ENCODE measurements at regions of chr4 and their contacts with region 1.

Region 1: DNA sequence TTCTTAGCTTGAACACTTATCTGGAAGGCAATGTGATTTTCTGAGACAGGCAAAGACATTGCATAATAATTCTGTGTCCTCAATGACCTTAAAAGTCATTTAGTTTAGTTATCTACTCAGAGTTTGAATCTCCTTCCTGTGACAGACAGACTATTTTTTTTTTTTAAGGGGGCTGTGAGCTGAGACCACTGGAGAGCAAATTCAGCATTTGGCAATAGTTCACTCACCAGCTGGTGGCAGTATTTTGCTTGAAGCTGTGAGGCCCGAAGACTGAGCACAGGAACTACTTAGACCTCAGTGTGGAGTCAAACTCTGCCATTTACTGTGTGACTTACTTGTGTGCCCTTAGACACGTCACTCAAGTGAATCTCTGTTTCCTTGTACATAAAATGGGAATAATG is 22.9 kb upstream of the CPE start:
- DNase-seq: peak in 1 of 4 experiments; percentile 34
- ATAC-seq: peak; percentile 67
- H3K4me3 ChIP-seq: no peak overlapping the region
- H3K27ac ChIP-seq: no peak overlapping the region
- H3K4me1 ChIP-seq: no peaks in the 10 kb centered on the region; a peak in 1 of 5 replicates
- H3K27me3 ChIP-seq: peaks cover 5 to 6% of the 10 kb centered on the region in 2 experiments; a peak in 2 of 5 replicates
- CTCF ChIP-seq: peak; percentile 37 to 46 (median 42); a peak in 5 of 6 replicates
- EP300 ChIP-seq: no peak
- POLR2A ChIP-seq: no peak
- RAD21 ChIP-seq: peak; percentile 45 to 49

Region 2: DNA sequence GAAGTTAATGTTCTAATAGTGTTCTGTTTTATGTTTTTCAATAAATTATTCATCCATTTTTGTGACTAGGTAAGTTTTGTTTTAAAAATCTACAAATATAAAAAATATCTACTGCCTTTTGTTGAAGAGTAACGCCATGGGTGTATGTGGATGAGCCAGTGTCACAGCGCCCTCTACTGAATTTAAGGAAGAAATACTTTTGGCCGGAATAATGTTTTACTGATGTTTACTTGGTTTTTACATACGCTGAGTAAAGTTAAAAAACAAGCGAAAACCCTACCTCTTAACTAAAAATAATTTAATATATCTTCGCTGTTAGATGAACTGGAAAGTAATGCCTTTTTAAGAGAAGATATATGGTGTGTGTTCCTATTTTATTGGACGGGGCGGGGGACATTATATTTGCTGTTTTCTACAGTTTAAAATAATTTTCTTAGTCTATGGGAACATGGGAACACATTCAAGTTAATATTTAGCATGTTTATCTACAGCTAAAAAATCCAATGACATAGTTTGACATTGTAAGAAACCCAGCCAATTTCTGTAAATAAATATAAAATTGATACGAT is 109.0 kb after region 1 on chr4:
- CTCF ChIA-PET with region 1: interaction called, 4 read pairs
- POLR2A ChIA-PET with region 1: no interaction called
- in situ Hi-C with region 1: no loop called
- intact Hi-C with region 1: loop called (anchors 2 kb)
- DNase-seq: peak; percentile 60 to 66 (median 62)
- ATAC-seq: peak; percentile 75
- H3K4me3 ChIP-seq: no peak overlapping the region
- H3K27ac ChIP-seq: no peak overlapping the region
- H3K4me1 ChIP-seq: peaks cover 0 to 4% of the 10 kb centered on the region in 2 experiments; a peak in 2 of 5 replicates
- H3K27me3 ChIP-seq: no peaks in the 10 kb centered on the region
- CTCF ChIP-seq: peak; percentile 66 to 90 (median 70)
- EP300 ChIP-seq: no peak
- POLR2A ChIP-seq: no peak
- RAD21 ChIP-seq: peak; percentile 85 to 93

Region 3: GRCh38 chr4:165548702-165549101 is 192.8 kb after region 1 on chr4:
- CTCF ChIA-PET with region 1: no interaction called
- POLR2A ChIA-PET with region 1: no interaction called
- in situ Hi-C with region 1: no loop called
- intact Hi-C with region 1: no loop called
- DNase-seq: no peak
- ATAC-seq: no peak
- H3K4me3 ChIP-seq: no peak overlapping the region
- H3K27ac ChIP-seq: no peak overlapping the region
- H3K4me1 ChIP-seq: no peaks in the 10 kb centered on the region
- H3K27me3 ChIP-seq: no peaks in the 10 kb centered on the region
- CTCF ChIP-seq: no peak
- EP300 ChIP-seq: no peak
- POLR2A ChIP-seq: no peak
- RAD21 ChIP-seq: no peak